Left cardiac atrium (tissue), 4 donors: ENCODE measurements at regions of chr4 and their contacts with region 1.

Region 1: GRCh38 chr4:121462660-121463261 is 81.9 kb upstream of the QRFPR start:
- DNase-seq: peak; percentile 40
- ATAC-seq: peak; percentile 61 to 63

Region 2: GRCh38 chr4:121656269-121656641 is 193.5 kb after region 1 on chr4:
- intact Hi-C with region 1: loop called in 1 of 2 experiments (anchors 5 kb)
- DNase-seq: peak; percentile 58
- ATAC-seq: peak; percentile 76 to 87

Region 3: DNA sequence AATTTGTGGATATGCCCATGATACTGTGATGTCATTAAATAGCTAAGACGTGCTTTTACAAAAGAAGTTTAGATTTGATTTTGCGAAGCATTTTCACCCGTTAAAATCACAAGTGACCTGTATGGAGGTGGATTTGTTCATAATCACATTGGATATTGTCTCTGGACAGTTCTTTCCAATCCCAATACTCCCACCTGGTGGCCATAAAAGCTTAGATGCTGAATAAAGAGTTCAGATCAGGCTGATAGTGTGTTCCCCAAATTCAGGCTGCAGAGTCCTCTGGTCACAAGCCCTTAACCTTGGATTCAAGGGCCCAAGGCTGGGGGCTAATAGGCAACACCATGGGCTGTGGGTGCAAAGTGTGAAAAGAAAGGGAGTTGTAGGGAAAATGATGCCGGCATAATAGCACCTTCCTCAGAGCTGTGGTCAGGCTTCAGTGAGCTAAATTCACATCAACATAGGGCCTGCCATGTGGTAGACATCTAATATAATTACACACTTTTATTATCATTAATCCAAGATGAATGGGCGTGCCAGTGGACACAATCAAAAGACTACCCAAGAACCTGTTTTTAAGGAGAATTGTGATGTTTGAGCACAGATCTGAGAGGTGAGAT is 274.1 kb after region 1 on chr4:
- intact Hi-C with region 1: loop called in 1 of 2 experiments (anchors 5 kb)
- DNase-seq: no peak
- ATAC-seq: peak; percentile 41 to 51